ENCODE measurements at regions of chr3 and their contacts with region 1.

Region 1: DNA sequence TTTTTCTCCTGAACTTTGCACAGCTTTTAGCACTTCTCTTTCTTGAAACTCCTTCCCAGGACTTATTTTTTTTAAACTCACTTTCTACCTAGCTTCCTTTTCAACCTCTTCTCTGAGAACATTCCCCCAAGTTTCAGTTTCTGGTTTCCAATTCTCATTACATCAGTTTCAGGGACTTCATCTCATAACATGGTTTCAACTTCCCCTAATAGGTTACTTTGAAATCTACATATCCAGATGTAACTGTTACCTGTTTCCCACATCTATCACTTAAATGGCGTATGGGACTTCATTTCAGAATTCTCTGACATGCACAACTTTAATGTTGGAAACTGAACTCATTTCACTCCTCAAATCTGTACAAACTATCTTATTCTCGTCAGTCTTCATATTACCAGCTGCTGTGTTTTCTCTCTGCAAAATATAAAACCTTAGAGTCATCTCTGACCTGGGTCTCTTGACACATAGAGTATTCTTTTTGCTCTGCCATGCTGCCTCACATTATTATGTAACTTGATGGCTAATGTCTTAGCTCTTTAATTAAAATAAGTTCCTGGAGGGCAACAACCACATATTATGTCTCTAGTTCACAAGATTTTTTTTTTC is 58.4 kb downstream of the NME9 start:
- DNase-seq: no peak
- H3K4me3 ChIP-seq: no peak overlapping the region
- H3K27ac ChIP-seq: no peak overlapping the region
- H3K4me1 ChIP-seq: no peaks in the 10 kb centered on the region
- H3K27me3 ChIP-seq: no peaks in the 10 kb centered on the region
- CTCF ChIP-seq: no peak
- EP300 ChIP-seq: no peak
- POLR2A ChIP-seq: no peak
- RAD21 ChIP-seq: no peak

Region 2: DNA sequence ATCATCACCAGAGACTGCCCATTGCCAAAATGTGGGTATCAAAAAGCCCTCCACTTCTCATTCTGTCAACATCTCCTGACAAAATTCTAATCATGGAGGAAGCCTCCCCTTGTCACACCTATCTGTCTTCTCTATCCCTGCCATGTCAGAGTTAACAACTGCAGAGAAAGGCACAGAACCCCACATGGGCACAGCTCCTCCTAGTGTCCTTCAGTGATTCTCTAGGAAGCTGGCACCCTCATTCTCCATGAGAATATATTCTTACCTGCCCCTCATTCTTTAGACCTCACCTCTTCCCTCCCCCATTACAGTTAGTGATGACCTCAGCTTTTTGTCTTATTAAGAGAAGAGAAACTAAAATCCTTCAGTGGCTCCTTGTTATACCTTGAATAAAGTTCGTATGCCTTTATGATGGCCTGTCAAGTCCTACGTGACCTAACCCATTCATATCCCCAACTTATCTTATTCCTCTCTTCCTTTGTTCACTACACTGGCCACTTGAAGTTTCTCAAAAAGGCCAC is 13.7 kb after region 1 on chr3:
- CTCF ChIA-PET with region 1: interaction called, 4 read pairs
- POLR2A ChIA-PET with region 1: interaction called, 13 read pairs
- DNase-seq: peak in 1 of 2 experiments; percentile 38
- H3K4me3 ChIP-seq: no peak overlapping the region
- H3K27ac ChIP-seq: no peak overlapping the region
- H3K4me1 ChIP-seq: 0 out of 7 replicates have a peak, but pooled peaks cover 0 to 2% (median 0%) of the 10 kb centered on the region in 4 experiments
- H3K27me3 ChIP-seq: no peaks in the 10 kb centered on the region
- CTCF ChIP-seq: peak in 2 of 3 experiments; percentile 26 to 52; a peak in 2 of 4 replicates
- EP300 ChIP-seq: no peak
- POLR2A ChIP-seq: no peak
- RAD21 ChIP-seq: peak; percentile 44 to 53